ENCODE measurements at regions of chr2 and their contacts with region 1.

Region 1: GRCh38 chr2:8389373-8390108 is 292.3 kb upstream of the ID2 start:
- DNase-seq: no peak
- H3K4me3 ChIP-seq: no peak overlapping the region
- H3K27ac ChIP-seq: no peak overlapping the region
- H3K4me1 ChIP-seq: no peaks in the 10 kb centered on the region
- CTCF ChIP-seq: no peak

Region 2: GRCh38 chr2:8378016-8378810 is 11.3 kb before region 1 on chr2:
- CTCF ChIA-PET with region 1: no interaction called
- POLR2A ChIA-PET with region 1: interaction called, 13 read pairs
- intact Hi-C with region 1: no loop called
- DNase-seq: peak; percentile 6
- H3K4me3 ChIP-seq: no peak overlapping the region
- H3K27ac ChIP-seq: no peak overlapping the region
- H3K4me1 ChIP-seq: peaks cover 38% of the 10 kb centered on the region
- CTCF ChIP-seq: no peak

Region 3: GRCh38 chr2:8633735-8634313 is 244.3 kb after region 1 on chr2:
- CTCF ChIA-PET with region 1: no interaction called
- POLR2A ChIA-PET with region 1: no interaction called
- intact Hi-C with region 1: no loop called
- DNase-seq: no peak
- H3K4me3 ChIP-seq: no peak overlapping the region
- H3K27ac ChIP-seq: no peak overlapping the region
- H3K4me1 ChIP-seq: peaks cover 47% of the 10 kb centered on the region
- CTCF ChIP-seq: no peak

Measured in OCI-LY7 (cell line).